ENCODE measurements at regions of chr9 and their contacts with region 1.

Region 1: DNA sequence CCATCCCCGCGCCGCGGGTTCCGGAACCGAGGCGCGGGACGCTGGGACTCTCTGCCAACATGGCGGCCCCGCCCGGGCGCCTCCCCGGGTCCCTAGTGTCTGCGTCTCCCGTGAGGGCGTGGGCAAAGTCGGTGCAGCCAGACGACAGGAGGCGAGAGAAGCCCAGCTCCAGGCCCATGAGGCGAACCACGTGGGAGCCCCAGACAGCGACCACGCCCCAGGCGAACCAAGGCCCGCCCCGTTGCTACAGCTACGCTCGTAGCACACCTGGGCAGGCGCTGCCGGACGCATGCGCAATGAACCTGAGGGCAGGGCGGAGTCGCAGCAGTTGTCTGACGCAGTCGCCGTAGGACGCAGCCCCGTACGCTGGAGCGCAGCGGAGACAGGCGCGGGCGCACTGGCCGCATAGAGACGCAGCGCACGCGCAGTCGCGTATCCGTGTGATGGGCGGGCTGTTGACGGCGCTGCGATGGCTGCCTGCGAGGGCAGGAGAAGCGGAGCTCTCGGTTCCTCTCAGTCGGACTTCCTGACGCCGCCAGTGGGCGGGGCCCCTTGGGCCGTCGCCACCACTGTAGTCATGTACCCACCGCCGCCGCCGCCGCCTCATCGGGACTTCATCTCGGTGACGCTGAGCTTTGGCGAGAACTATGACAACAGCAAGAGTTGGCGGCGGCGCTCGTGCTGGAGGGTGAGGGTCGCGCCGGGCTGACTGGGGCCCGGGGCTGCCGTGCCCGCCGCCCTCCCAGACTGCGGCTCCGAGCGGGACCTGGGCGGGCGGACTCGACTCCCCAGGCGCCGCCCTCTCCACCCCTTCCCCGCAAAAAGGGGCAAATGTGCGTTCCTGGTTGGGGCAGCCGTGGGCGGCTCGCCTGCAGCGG is at the start of gene MAN1B1:
- DNase-seq: peak; percentile 100
- H3K27ac ChIP-seq: peak within 1 kb of the TSS; percentile 97
- CTCF ChIP-seq: no peak

Region 2: GRCh38 chr9:136372561-136373299 is 714.0 kb before region 1 on chr9:
- CTCF ChIA-PET with region 1: no interaction called
- POLR2A ChIA-PET with region 1: no interaction called
- DNase-seq: peak; percentile 31
- H3K27ac ChIP-seq: peak overlapping the region; percentile 35
- CTCF ChIP-seq: no peak

Region 3: DNA sequence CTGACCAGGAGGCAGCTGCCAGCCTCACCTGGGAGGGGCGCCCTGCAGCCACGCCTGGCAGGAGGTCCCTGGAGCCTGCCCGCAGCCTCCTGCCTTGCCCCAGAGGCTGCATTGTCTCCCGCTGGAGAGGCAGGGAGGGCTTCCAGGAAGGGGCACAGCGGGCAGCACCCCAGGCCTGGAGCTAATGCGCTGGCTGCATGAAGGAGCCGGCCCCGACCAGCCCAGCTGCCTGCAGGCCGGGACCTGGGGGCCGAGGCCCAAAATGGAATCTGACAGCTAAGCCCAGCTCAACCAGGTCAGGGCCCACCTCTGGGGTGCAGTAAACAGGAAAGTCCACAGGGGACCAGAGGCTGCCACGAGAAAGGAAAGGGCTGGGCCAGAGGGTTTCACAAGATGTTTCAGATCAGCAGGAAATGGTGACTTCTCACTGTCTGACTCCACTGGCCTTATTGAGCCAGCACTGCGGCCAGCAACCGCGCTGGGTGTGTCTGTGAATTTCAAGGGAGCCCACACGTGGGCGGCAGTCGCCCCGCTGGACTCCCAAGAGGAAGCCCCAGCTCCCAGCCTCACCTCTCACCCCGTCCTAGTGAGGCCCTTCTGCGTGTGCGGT is 522.3 kb before region 1 on chr9:
- CTCF ChIA-PET with region 1: no interaction called
- POLR2A ChIA-PET with region 1: no interaction called
- DNase-seq: no peak
- H3K27ac ChIP-seq: peak overlapping the region; percentile 97
- CTCF ChIP-seq: no peak; the same call in 1 of the 2 replicates

Region 4: GRCh38 chr9:137070201-137070905 is 16.4 kb before region 1 on chr9 and contains the start of gene SAPCD2:
- CTCF ChIA-PET with region 1: interaction called, 12 read pairs
- POLR2A ChIA-PET with region 1: interaction called, 15 read pairs
- DNase-seq: peak; percentile 96
- H3K27ac ChIP-seq: peak within 1 kb of the TSS; percentile 85
- CTCF ChIP-seq: no peak

Region 5: GRCh38 chr9:137205126-137206069 is 118.6 kb after region 1 on chr9 and contains the starts of genes NDOR1 and TMEM203:
- CTCF ChIA-PET with region 1: no interaction called
- POLR2A ChIA-PET with region 1: no interaction called
- DNase-seq: peak; percentile 96
- H3K27ac ChIP-seq: peak within 1 kb of the TSS; percentile 80
- CTCF ChIP-seq: no peak

Measured in RWPE1 (cell line).